CD8-positive, alpha-beta T cell (primary cell): ENCODE measurements at regions of chr12 and their contacts with region 1.

Region 1: DNA sequence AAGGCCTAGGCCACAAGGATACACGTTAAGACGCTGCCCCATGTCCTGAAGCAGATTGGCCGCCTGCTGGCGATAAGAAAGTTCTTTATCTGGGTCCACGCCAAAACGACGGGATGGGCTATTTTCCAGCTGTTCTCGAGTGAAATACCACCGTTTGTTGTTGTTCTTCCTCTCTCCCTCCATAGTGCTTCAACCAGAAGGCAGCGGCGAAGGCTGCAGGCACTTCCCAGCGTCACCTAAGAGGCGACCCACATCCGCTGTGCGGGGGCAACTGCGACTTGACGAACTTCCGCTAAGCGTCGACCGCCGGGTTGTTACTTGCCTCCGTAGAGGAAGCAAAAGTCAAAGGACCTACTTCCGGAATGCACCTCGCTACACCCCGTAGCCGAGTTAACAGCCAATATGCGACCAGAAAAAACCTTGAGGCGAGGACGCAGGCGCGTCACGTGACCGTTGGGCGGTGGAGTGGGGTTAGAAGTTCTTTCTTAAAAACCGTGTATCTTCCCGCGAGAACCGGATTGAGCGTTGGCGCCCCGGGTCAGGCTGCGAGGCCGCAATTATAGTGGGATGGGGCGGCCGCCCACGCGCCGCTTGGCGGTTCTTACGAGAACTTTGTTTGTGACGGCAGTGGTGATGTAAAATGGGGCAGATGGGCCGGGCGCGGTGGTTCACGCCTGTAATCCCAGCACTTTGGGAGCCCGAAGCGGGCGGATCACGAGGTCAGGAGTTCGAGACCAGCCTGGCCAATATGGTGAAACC is at the start of gene CCNT1:
- DNase-seq: peak; percentile 96 to 100 (median 97)
- ATAC-seq: peak; percentile 86
- H3K4me3 ChIP-seq: peak within 1 kb of the TSS; percentile 84
- H3K4me3 Mint-ChIP-seq: peak within 1 kb of the TSS; percentile 92
- H3K27ac ChIP-seq: peak within 1 kb of the TSS; percentile 96 to 99
- H3K27ac Mint-ChIP-seq: peak within 1 kb of the TSS; percentile 98
- H3K4me1 ChIP-seq: peaks cover 30% of the 10 kb centered on the region
- H3K4me1 Mint-ChIP-seq: peaks cover 40% of the 10 kb centered on the region
- H3K27me3 ChIP-seq: no peaks in the 10 kb centered on the region
- H3K27me3 Mint-ChIP-seq: no peaks in the 10 kb centered on the region
- CTCF ChIP-seq: no peak
- total RNA-seq, gene CCNT1: 127 to 132 TPM

Region 2: GRCh38 chr12:47773062-47773857 is 943.4 kb before region 1 on chr12 and contains the start of gene SLC48A1:
- CTCF ChIA-PET with region 1: no interaction called
- POLR2A ChIA-PET with region 1: no interaction called
- intact Hi-C with region 1: loop called in 1 of 2 experiments (anchors 5 kb)
- DNase-seq: peak; percentile 50 to 85 (median 71)
- ATAC-seq: peak; percentile 93
- H3K4me3 ChIP-seq: peak within 1 kb of the TSS; percentile 43 to 58
- H3K4me3 Mint-ChIP-seq: peak within 1 kb of the TSS; percentile 85
- H3K27ac ChIP-seq: peak within 1 kb of the TSS in 1 of 2 experiments; percentile 24
- H3K27ac Mint-ChIP-seq: peak within 1 kb of the TSS; percentile 66
- H3K4me1 ChIP-seq: peaks cover 16% of the 10 kb centered on the region
- H3K4me1 Mint-ChIP-seq: peaks cover 14% of the 10 kb centered on the region
- H3K27me3 ChIP-seq: no peaks in the 10 kb centered on the region
- H3K27me3 Mint-ChIP-seq: no peaks in the 10 kb centered on the region
- CTCF ChIP-seq: no peak
- total RNA-seq, gene SLC48A1: 4.3 to 5.5 TPM

Region 3: GRCh38 chr12:48296586-48297282 is 419.9 kb before region 1 on chr12:
- CTCF ChIA-PET with region 1: no interaction called
- POLR2A ChIA-PET with region 1: no interaction called
- intact Hi-C with region 1: no loop called
- DNase-seq: peak in 8 of 9 experiments; percentile 2 to 65 (median 45)
- ATAC-seq: peak; percentile 83
- H3K4me3 ChIP-seq: peak overlapping the region; percentile 47 to 56
- H3K4me3 Mint-ChIP-seq: peak overlapping the region; percentile 83
- H3K27ac ChIP-seq: no peak overlapping the region
- H3K27ac Mint-ChIP-seq: no peak overlapping the region
- H3K4me1 ChIP-seq: peaks cover 3% of the 10 kb centered on the region
- H3K4me1 Mint-ChIP-seq: peaks cover 11% of the 10 kb centered on the region
- H3K27me3 ChIP-seq: no peaks in the 10 kb centered on the region
- H3K27me3 Mint-ChIP-seq: peaks cover 8% of the 10 kb centered on the region
- CTCF ChIP-seq: no peak

Region 4: DNA sequence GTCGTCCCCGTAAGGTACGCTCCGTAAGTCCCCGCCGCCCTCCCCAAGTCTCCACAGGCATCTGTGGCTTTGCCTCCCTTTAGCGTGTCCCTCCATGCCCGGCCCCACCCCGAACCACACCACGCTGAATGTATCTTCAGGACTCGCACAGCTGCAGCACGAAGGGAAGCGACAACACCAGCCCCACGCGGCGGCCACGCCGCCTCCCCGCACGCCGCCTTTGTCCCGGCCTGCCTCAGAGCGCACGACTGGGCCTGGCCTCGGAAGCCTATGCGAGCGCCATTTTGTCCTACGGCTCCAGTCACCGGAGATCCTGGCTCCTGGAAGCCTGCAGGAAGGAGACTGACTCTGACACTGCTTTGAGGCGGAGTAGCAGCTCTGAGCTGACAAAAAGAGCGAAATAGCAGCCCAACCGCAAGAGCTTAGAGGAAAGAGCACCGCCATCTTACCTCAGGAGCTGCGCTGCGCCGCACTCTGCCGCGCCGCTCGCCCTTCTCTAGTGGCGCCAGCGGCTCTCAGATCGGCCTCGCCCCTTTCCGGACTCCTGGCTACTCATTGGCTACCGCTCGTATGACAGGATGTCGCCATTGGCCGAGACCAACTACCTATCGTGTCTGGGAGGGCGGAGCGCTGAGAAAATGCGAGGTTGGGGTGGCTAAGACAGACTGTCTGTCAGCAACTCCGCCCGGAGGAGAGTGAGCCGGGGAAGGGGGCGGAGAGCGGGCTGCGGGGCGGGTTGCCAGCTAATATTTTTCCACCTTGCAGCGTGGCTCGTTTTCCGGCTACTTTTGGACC is 34.7 kb before region 1 on chr12 and contains the start of gene KANSL2:
- CTCF ChIA-PET with region 1: no interaction called
- POLR2A ChIA-PET with region 1: interaction called, 29 read pairs
- intact Hi-C with region 1: loop called (anchors 1 kb)
- DNase-seq: peak; percentile 93 to 99 (median 96)
- ATAC-seq: peak; percentile 94
- H3K4me3 ChIP-seq: peak within 1 kb of the TSS; percentile 66 to 91
- H3K4me3 Mint-ChIP-seq: peak within 1 kb of the TSS; percentile 95
- H3K27ac ChIP-seq: peak within 1 kb of the TSS; percentile 80 to 90
- H3K27ac Mint-ChIP-seq: peak within 1 kb of the TSS; percentile 98
- H3K4me1 ChIP-seq: peaks cover 45% of the 10 kb centered on the region
- H3K4me1 Mint-ChIP-seq: peaks cover 49% of the 10 kb centered on the region
- H3K27me3 ChIP-seq: no peaks in the 10 kb centered on the region
- H3K27me3 Mint-ChIP-seq: no peaks in the 10 kb centered on the region
- CTCF ChIP-seq: no peak
- total RNA-seq, gene KANSL2: 175 to 179 TPM

Region 5: GRCh38 chr12:48696626-48697025 is 20.0 kb before region 1 on chr12:
- CTCF ChIA-PET with region 1: no interaction called
- POLR2A ChIA-PET with region 1: interaction called, 5 read pairs
- intact Hi-C with region 1: loop called in 1 of 2 experiments (anchors 2 kb)
- DNase-seq: no peak
- ATAC-seq: no peak
- H3K4me3 ChIP-seq: no peak overlapping the region
- H3K4me3 Mint-ChIP-seq: no peak overlapping the region
- H3K27ac ChIP-seq: no peak overlapping the region
- H3K27ac Mint-ChIP-seq: no peak overlapping the region
- H3K4me1 ChIP-seq: no peaks in the 10 kb centered on the region
- H3K4me1 Mint-ChIP-seq: peaks cover 12% of the 10 kb centered on the region
- H3K27me3 ChIP-seq: no peaks in the 10 kb centered on the region
- H3K27me3 Mint-ChIP-seq: no peaks in the 10 kb centered on the region
- CTCF ChIP-seq: no peak

Region 6: DNA sequence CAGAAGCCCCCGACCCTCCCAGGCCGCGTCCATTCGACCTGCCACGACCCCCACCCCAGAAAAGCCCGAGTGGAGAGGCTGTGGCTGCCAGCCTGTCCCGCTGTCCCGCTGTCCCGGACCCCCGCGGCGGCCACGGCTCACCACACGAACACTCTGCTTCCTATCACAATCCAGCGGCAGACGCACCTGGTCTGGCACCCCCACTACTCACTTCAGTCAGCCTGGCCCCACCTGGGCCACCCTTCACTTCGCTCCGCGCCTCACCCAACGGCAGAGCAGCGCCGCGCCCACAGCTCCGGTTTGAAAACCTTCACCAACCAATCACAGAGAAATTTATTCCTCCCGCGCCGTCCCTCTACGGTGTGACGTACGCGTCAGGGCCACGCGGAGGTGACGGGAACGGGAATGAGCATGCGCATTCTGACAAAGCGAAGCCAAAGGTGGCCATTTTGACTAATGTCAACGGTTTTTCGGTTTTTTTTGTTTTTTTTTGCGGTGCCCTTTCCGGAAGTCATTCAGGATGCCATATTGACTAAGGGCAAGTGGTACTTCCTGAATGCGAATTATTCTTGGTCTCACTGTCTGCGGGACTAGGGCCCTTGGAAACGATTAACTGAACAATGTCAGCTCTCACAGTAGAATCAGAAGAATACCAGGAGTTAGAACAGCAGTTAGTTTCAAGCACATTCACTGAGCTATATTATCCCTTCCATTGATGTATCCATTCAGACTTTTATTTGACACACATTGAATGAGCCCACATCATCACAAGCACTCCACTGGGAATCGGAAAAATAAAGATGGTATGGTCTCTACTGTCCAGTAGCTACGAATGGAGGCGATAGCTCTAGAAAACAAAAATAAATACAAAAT is 1308.8 kb after region 1 on chr12 and contains the start of gene RACGAP1:
- CTCF ChIA-PET with region 1: no interaction called
- POLR2A ChIA-PET with region 1: no interaction called
- intact Hi-C with region 1: loop called in 1 of 2 experiments (anchors 5 kb)
- DNase-seq: peak; percentile 88 to 99 (median 94)
- ATAC-seq: peak; percentile 97
- H3K4me3 ChIP-seq: peak within 1 kb of the TSS; percentile 62 to 78
- H3K4me3 Mint-ChIP-seq: peak within 1 kb of the TSS; percentile 98
- H3K27ac ChIP-seq: peak within 1 kb of the TSS; percentile 38 to 63
- H3K27ac Mint-ChIP-seq: peak within 1 kb of the TSS; percentile 86
- H3K4me1 ChIP-seq: no peaks in the 10 kb centered on the region
- H3K4me1 Mint-ChIP-seq: peaks cover 16% of the 10 kb centered on the region
- H3K27me3 ChIP-seq: no peaks in the 10 kb centered on the region
- H3K27me3 Mint-ChIP-seq: no peaks in the 10 kb centered on the region
- CTCF ChIP-seq: no peak
- total RNA-seq, gene RACGAP1: 2.2 to 2.8 TPM